ENCODE measurements at regions of chr1 and their contacts with region 1.

Region 1: DNA sequence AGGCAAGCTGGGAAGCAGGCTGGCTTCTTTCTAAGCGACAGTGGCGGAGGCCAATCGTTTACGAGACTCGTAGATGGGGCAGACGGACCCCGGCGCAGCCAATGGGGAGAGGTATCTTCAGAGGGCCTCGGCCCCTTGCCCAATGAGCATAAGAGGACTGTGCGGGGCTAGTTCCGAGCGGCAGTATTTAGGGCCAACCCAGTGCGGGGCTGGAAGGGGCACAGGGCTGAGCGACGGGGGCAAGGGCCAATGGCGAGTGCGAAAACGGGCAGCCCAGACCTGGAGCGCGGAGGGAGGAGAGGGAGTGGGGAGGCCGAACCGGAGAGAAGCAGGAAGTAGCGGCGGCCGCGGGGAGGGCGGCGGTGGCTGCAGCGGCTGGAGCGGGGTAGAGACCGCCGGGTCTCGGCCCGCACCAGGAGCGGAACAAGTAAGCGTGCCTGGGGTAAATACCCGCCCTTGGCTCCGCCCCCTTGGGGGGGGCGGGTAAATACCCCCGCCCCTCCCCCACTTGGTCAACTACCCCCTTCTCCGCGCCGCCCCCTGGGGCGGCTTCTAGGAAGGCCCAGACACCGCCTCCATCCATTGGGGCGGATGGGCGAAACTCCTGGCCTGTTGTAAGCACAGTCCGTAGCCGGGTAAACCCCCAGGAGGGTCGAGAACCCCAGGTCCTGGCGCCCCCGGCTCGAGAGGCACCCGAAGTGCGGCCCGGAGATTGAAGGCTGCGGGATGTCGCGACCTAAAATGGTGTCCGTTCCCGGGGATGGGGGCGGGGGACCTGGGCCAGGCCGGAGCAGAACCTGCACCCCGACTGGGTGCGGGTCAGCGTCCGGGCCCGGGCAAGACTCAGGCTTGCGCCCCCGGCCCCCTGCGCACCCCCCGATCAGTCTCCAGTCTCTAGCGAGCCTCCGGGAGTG is at the start of gene ZNF687:
- DNase-seq: peak; percentile 96 to 100 (median 99)
- ATAC-seq: peak; percentile 87 to 89 (median 88)
- H3K4me3 ChIP-seq: peak within 1 kb of the TSS; percentile 74 to 93
- H3K4me3 Mint-ChIP-seq: peak within 1 kb of the TSS; percentile 91 to 98 (median 97)
- H3K27ac ChIP-seq: peak within 1 kb of the TSS; percentile 95
- H3K27ac Mint-ChIP-seq: peak within 1 kb of the TSS; percentile 94 to 95
- H3K4me1 ChIP-seq: peaks cover 2 to 33% of the 10 kb centered on the region in 2 experiments
- H3K4me1 Mint-ChIP-seq: peaks cover 29 to 41% (median 33%) of the 10 kb centered on the region in 3 donors
- H3K27me3 ChIP-seq: no peaks in the 10 kb centered on the region
- H3K27me3 Mint-ChIP-seq: no peaks in the 10 kb centered on the region
- total RNA-seq, gene ZNF687: 27.7 to 44.2 (median 40.5) TPM

Region 2: GRCh38 chr1:150846473-150847146 is 435.6 kb before region 1 on chr1:
- CTCF ChIA-PET with region 1: no interaction called
- POLR2A ChIA-PET with region 1: no interaction called
- DNase-seq: no peak
- ATAC-seq: no peak
- H3K4me3 ChIP-seq: no peak overlapping the region
- H3K4me3 Mint-ChIP-seq: no peak overlapping the region
- H3K27ac ChIP-seq: no peak overlapping the region
- H3K27ac Mint-ChIP-seq: peak overlapping the region in 1 of 2 donors; percentile 18
- H3K4me1 ChIP-seq: peaks cover 4 to 10% of the 10 kb centered on the region in 2 experiments
- H3K4me1 Mint-ChIP-seq: peaks cover 18 to 20% (median 20%) of the 10 kb centered on the region in 3 donors
- H3K27me3 ChIP-seq: no peaks in the 10 kb centered on the region
- H3K27me3 Mint-ChIP-seq: no peaks in the 10 kb centered on the region

Region 3: DNA sequence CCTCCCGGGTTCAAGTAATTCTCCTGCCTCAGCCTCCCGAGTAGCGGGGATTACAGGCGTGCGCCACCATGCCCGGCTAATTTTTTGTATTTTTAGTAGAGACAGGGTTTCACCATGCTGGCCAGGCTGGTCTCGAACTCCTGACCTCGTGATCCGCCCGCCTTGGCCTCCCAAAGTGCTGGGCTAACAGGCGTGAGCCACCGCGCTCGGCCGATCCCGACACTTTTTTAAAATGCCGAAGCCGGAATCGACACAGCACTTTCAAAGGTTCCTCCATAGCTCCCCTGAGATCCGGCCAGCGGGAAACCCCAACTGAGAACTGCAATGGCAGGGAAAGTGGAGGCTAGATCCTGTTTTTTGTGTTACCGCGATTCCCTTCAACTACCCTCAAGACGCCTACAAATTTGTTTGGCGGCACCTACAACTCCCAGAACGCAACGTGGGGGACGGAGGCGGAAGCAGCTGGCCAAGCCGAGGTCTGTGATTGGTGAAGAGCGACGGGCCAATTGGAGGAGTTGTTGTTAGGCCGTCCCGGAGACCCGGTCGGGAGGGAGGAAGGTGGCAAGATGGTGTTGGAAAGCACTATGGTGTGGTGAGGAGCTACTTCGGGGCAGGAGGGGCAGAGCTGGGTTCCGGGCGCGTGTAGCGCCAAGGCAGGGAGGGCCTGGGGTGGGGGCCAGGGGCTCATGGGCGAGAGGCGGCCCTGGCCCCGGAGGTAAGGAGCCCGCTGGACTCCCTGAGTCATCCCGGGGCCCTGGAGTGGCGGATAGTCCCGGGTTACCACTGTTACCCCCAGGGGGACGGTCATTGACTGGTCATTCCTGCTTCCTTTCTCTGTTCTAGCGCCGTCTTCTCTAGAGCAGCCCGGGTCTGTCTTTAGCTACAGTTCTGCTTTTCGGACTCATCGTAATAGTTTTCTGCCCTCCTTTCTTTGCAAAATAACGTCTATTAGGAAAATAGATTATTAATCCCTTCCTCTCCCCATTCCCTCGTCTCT is 27.7 kb before region 1 on chr1 and contains the start of gene PSMD4:
- CTCF ChIA-PET with region 1: interaction called in 1 of 2 experiments, 12 read pairs
- POLR2A ChIA-PET with region 1: interaction called in 1 of 2 experiments, 3 read pairs
- DNase-seq: peak; percentile 78 to 97 (median 93)
- ATAC-seq: peak; percentile 93 to 96 (median 94)
- H3K4me3 ChIP-seq: peak within 1 kb of the TSS; percentile 82 to 92
- H3K4me3 Mint-ChIP-seq: peak within 1 kb of the TSS; percentile 83 to 91 (median 88)
- H3K27ac ChIP-seq: peak within 1 kb of the TSS; percentile 69
- H3K27ac Mint-ChIP-seq: peak within 1 kb of the TSS; percentile 89
- H3K4me1 ChIP-seq: peaks cover 6 to 29% of the 10 kb centered on the region in 2 experiments
- H3K4me1 Mint-ChIP-seq: peaks cover 27 to 39% (median 36%) of the 10 kb centered on the region in 3 donors
- H3K27me3 ChIP-seq: no peaks in the 10 kb centered on the region
- H3K27me3 Mint-ChIP-seq: no peaks in the 10 kb centered on the region
- total RNA-seq, gene PSMD4: 68.1 to 150 (median 133) TPM

Region 4: GRCh38 chr1:151340870-151341754 is 58.9 kb after region 1 on chr1:
- CTCF ChIA-PET with region 1: interaction called, 3 to 22 read pairs
- POLR2A ChIA-PET with region 1: no interaction called
- DNase-seq: peak in 28 of 35 experiments; percentile 14 to 83 (median 32)
- ATAC-seq: peak; percentile 84 to 87 (median 86)
- H3K4me3 ChIP-seq: no peak overlapping the region
- H3K4me3 Mint-ChIP-seq: no peak overlapping the region
- H3K27ac ChIP-seq: peak overlapping the region; percentile 35
- H3K27ac Mint-ChIP-seq: peak overlapping the region; percentile 7 to 70
- H3K4me1 ChIP-seq: peaks cover 3 to 12% of the 10 kb centered on the region in 2 experiments
- H3K4me1 Mint-ChIP-seq: peaks cover 13 to 39% (median 24%) of the 10 kb centered on the region in 3 donors
- H3K27me3 ChIP-seq: no peaks in the 10 kb centered on the region
- H3K27me3 Mint-ChIP-seq: no peaks in the 10 kb centered on the region